ENCODE measurements at regions of chr13 and their contacts with region 1.

Region 1: DNA sequence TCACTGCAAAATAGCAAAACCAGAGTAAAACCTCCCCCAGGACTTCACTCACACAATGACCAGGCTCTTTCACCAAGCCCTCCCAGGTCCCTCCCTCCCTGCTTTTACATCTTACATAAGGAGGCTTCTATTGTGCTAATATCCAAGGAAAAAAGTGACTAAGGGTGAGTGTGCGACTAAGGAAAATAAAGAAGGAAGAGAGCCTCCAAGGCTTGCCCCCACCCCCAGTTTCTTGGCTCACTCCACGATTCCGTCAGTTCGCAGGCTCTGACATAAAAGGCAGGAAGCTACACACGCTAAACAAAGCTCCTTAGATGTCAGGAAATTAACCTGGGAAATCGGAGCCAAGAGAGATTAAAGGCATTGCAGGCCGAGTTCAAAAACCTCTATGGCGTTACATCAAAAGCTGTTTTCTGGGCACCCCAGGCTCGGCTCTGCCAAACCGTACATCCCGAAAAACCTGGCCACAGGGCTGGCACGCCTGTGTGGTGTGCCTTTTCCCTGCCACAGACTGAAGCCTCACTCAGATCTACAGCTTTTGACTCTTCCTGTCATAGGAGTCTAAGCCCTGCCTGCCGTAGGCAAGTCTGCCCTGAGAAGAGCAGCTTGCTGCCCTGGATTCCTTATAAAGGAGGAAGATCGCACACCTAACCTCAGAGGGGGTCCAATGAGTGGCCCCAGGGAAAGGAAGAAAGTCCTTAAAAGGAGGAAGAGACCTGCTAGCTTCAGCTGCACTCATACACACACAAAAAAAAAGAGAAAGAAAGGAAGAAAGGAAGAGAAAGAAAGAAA is 67.0 kb upstream of the SERP2 start:
- DNase-seq: peak; percentile 99
- H3K4me3 Mint-ChIP-seq: peak overlapping the region; percentile 51
- H3K27ac Mint-ChIP-seq: peak overlapping the region; percentile 93
- H3K4me1 Mint-ChIP-seq: peaks cover 79% of the 10 kb centered on the region
- H3K27me3 Mint-ChIP-seq: no peaks in the 10 kb centered on the region
- CTCF ChIP-seq: no peak

Region 2: GRCh38 chr13:44237276-44237767 is 69.3 kb before region 1 on chr13:
- CTCF ChIA-PET with region 1: interaction called, 9 read pairs
- POLR2A ChIA-PET with region 1: interaction called, 24 read pairs
- intact Hi-C with region 1: no loop called
- DNase-seq: peak; percentile 95
- H3K4me3 Mint-ChIP-seq: no peak overlapping the region
- H3K27ac Mint-ChIP-seq: peak overlapping the region; percentile 37
- H3K4me1 Mint-ChIP-seq: peaks cover 25% of the 10 kb centered on the region
- H3K27me3 Mint-ChIP-seq: no peaks in the 10 kb centered on the region
- CTCF ChIP-seq: no peak

Region 3: DNA sequence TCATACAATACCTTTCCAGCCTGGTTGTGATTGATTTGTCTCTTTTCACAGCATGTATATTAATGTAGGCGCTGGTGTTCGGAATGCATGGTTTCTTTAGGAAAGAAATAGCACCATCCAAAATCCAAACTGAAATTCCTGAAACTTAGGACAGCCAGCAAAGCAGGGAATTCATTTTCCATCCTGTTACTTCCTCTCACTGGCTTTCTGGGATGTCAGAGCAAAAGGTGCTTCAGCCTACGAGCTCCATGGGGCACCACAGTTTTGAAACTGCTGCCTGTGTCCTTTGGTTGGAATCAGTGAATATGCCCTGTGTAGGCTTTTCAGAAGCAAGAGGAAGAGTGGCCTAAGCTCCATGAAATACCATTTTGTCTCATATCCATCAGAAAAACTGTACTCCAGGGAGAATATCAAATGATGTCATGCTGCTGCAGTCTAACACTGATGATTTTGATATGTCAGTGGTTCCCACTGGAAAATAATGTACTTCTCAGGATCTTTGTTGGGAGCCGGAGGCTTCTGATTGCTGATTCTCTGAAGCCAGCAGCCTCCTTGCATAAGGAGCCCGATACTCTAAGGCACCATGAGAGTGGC is 50.7 kb before region 1 on chr13:
- CTCF ChIA-PET with region 1: no interaction called
- POLR2A ChIA-PET with region 1: no interaction called
- intact Hi-C with region 1: no loop called
- DNase-seq: no peak
- H3K4me3 Mint-ChIP-seq: no peak overlapping the region
- H3K27ac Mint-ChIP-seq: no peak overlapping the region
- H3K4me1 Mint-ChIP-seq: peaks cover 9% of the 10 kb centered on the region
- H3K27me3 Mint-ChIP-seq: no peaks in the 10 kb centered on the region
- CTCF ChIP-seq: no peak

Region 4: DNA sequence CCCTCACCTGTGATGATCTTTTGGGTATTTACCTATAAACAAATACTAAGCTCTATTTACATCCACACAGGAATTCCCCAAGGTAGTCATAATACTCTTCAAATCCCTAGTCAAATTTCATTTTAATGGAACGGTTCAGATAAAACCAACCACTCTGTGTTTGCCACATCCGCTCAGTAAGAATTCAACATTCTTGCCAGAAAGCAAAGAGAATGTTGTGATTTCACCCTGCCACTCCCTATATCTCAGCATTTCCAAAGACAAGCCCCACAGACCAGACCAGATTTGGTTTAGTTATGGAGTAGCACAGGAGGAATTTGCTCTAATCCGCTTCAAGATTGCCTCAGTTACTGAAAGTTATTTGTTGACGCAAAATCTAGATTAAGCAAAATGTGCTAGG is 38.6 kb before region 1 on chr13:
- CTCF ChIA-PET with region 1: interaction called, 3 read pairs
- POLR2A ChIA-PET with region 1: interaction called, 82 read pairs
- intact Hi-C with region 1: no loop called
- DNase-seq: peak; percentile 80
- H3K4me3 Mint-ChIP-seq: peak overlapping the region; percentile 50
- H3K27ac Mint-ChIP-seq: peak overlapping the region; percentile 97
- H3K4me1 Mint-ChIP-seq: peaks cover 57% of the 10 kb centered on the region
- H3K27me3 Mint-ChIP-seq: no peaks in the 10 kb centered on the region
- CTCF ChIP-seq: no peak

Region 5: DNA sequence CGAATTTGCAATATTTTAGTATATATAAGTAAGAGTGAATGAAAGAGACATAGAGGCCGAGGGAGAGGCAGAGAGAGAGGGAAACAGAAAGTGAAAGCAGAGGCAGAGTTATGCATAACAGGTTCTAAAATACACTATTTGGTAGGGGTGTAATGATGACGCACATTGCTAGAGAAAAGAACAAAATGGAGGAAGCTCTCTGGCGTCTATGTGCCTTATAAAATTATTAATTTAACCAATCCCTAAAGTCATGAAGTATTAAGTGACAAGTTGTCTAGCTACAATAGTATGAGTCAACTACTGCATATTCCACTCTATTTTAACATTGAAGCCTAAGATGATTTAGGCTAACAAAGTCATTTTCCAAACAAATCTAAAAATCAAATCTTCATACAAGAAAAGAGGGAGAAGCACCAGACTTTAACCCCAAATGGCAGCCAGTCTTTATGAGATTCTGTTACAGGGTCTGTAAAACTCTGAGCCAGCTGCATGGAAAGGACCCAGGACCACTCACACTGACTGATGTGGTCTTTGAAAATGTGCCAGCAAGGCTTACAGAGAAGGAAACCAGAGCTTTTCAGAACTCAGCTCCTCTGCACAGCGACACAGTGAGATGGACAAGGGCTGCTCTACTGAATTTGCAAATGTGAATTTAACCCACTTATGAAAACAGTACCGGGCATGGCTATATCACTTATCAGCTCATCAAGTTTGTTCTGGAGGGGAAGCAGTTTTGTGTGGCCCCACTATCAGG is 32.0 kb before region 1 on chr13:
- CTCF ChIA-PET with region 1: interaction called, 5 read pairs
- POLR2A ChIA-PET with region 1: interaction called, 82 read pairs
- intact Hi-C with region 1: no loop called
- DNase-seq: peak; percentile 66
- H3K4me3 Mint-ChIP-seq: peak overlapping the region; percentile 60
- H3K27ac Mint-ChIP-seq: peak overlapping the region; percentile 94
- H3K4me1 Mint-ChIP-seq: peaks cover 37% of the 10 kb centered on the region
- H3K27me3 Mint-ChIP-seq: no peaks in the 10 kb centered on the region
- CTCF ChIP-seq: no peak

Region 6: DNA sequence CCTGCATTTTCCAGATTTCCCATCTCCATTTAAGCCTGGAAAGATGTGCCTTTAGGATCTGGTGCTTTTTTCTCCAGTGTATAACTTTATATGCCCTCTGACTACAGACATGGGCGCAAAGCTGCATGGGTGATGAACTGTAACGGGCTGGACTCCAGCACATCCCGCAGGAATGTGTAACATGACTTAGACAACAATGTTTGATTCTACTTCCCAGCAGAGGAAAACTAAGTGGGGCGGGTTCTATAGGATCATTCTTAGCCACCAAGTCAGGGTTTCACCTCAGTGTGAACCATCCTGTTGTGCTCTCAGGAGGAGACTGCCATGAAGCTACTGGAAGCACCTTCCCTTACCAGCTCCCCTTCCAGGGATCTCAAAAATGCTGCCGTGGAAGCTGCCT is 26.1 kb before region 1 on chr13:
- CTCF ChIA-PET with region 1: interaction called, 3 read pairs
- POLR2A ChIA-PET with region 1: interaction called, 10 read pairs
- intact Hi-C with region 1: no loop called
- DNase-seq: peak; percentile 63
- H3K4me3 Mint-ChIP-seq: no peak overlapping the region
- H3K27ac Mint-ChIP-seq: no peak overlapping the region
- H3K4me1 Mint-ChIP-seq: peaks cover 12% of the 10 kb centered on the region
- H3K27me3 Mint-ChIP-seq: no peaks in the 10 kb centered on the region
- CTCF ChIP-seq: no peak